ENCODE measurements at regions of chr12 and their contacts with region 1.

Region 1: GRCh38 chr12:26264215-26264838 is 69.0 kb downstream of the SSPN start:
- DNase-seq: no peak
- ATAC-seq: no peak
- H3K4me3 ChIP-seq: no peak overlapping the region
- H3K27ac ChIP-seq: no peak overlapping the region
- H3K4me1 ChIP-seq: no peaks in the 10 kb centered on the region
- H3K27me3 ChIP-seq: no peaks in the 10 kb centered on the region; a peak in 2 of 4 replicates
- CTCF ChIP-seq: no peak
- EP300 ChIP-seq: no peak
- POLR2A ChIP-seq: no peak
- RAD21 ChIP-seq: no peak

Region 2: GRCh38 chr12:26247873-26248272 is 16.5 kb before region 1 on chr12:
- CTCF ChIA-PET with region 1: interaction called, 6 read pairs
- POLR2A ChIA-PET with region 1: interaction called, 3 read pairs
- RAD21 ChIA-PET with region 1: no interaction called
- SMC1A ChIA-PET with region 1: interaction called, 10 read pairs
- in situ Hi-C with region 1: no loop called
- intact Hi-C with region 1: no loop called
- DNase-seq: no peak
- ATAC-seq: no peak
- H3K4me3 ChIP-seq: no peak overlapping the region
- H3K27ac ChIP-seq: no peak overlapping the region
- H3K4me1 ChIP-seq: no peaks in the 10 kb centered on the region
- H3K27me3 ChIP-seq: no peaks in the 10 kb centered on the region
- CTCF ChIP-seq: no peak
- EP300 ChIP-seq: no peak
- POLR2A ChIP-seq: no peak
- RAD21 ChIP-seq: no peak

Region 3: GRCh38 chr12:26287671-26288381 is 23.5 kb after region 1 on chr12:
- CTCF ChIA-PET with region 1: no interaction called
- POLR2A ChIA-PET with region 1: no interaction called
- RAD21 ChIA-PET with region 1: no interaction called
- SMC1A ChIA-PET with region 1: no interaction called
- in situ Hi-C with region 1: no loop called
- intact Hi-C with region 1: no loop called
- DNase-seq: no peak
- ATAC-seq: no peak; the same call in 2 of the 3 replicates
- H3K4me3 ChIP-seq: no peak overlapping the region
- H3K27ac ChIP-seq: no peak overlapping the region
- H3K4me1 ChIP-seq: no peaks in the 10 kb centered on the region
- H3K27me3 ChIP-seq: no peaks in the 10 kb centered on the region; a peak in 2 of 4 replicates
- CTCF ChIP-seq: no peak
- EP300 ChIP-seq: no peak
- POLR2A ChIP-seq: no peak
- RAD21 ChIP-seq: no peak

Region 4: DNA sequence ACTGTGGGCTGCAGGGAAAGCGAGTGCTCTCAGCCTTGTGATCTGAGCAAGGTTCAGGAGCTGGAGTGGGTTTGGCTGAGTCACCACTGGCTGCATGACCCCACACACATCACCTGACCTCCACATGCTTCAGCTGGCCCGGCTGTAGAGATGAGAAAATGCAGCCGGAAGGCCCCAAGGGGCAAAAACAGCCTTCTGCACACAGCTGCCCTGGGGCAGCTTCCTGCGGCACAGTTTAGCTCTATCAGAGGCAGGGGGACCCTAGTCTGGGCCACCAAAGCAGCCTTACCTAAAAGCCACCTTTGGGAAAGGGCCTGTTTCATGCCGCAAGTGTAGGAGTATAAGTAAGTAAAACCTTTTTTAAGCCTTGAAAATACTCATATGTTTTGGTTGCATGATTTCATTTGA is 54.3 kb after region 1 on chr12:
- CTCF ChIA-PET with region 1: interaction called, 3 read pairs
- POLR2A ChIA-PET with region 1: interaction called, 3 read pairs
- RAD21 ChIA-PET with region 1: interaction called, 3 read pairs
- SMC1A ChIA-PET with region 1: interaction called, 15 read pairs
- in situ Hi-C with region 1: no loop called
- intact Hi-C with region 1: no loop called
- DNase-seq: no peak
- ATAC-seq: peak; percentile 93
- H3K4me3 ChIP-seq: no peak overlapping the region
- H3K27ac ChIP-seq: no peak overlapping the region
- H3K4me1 ChIP-seq: peaks cover 14% of the 10 kb centered on the region
- H3K27me3 ChIP-seq: no peaks in the 10 kb centered on the region
- CTCF ChIP-seq: no peak
- EP300 ChIP-seq: peak in 1 of 2 experiments; percentile 35; a peak in 1 of 4 replicates
- POLR2A ChIP-seq: no peak
- RAD21 ChIP-seq: no peak